ENCODE measurements at regions of chr10 and their contacts with region 1.

Region 1: GRCh38 chr10:106625751-106626150 is 538.8 kb downstream of the SORCS1 start:
- DNase-seq: no peak
- H3K4me3 Mint-ChIP-seq: no peak overlapping the region
- H3K27ac Mint-ChIP-seq: no peak overlapping the region
- H3K4me1 Mint-ChIP-seq: peaks cover 5% of the 10 kb centered on the region
- H3K27me3 Mint-ChIP-seq: no peaks in the 10 kb centered on the region
- CTCF ChIP-seq: no peak

Region 2: DNA sequence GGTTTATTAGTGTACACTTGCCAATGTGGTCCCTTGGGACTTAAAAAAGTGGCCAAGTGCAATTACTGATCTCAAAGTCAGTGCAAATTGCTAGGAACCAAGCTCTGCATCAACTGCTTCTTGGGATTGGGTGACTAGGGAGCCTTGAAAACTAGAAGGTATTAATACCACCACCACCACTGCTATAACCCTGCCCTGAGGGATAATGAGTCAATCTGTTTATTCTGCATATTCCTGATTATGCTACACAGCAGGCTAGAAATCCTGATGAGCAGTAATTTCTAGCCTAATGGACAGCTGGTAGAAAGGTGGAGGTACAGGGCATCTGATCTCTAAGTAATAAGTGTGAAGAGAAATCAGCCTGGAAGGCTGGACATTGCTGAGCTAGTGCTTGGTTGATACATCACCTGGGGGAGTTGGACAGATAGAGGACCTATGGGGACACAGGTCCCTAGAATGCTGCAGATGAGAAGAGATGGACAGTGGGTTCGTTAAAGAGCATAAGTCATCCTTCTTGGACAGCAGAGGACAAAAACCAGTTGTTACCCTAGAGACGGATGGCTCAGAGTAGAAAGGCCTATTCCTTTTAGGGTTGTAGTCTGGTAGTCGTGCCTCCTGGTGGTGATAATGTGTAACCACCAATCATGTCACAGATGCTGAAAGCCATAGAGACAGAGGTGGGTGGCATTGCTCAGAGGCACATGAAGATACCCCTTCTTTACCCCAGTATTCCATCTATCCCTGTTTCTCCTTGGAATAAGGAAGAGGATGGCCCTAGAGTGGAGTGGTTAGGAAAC is 16.1 kb before region 1 on chr10:
- CTCF ChIA-PET with region 1: interaction called, 21 read pairs
- POLR2A ChIA-PET with region 1: no interaction called
- intact Hi-C with region 1: no loop called
- DNase-seq: peak; percentile 47
- H3K4me3 Mint-ChIP-seq: no peak overlapping the region
- H3K27ac Mint-ChIP-seq: no peak overlapping the region
- H3K4me1 Mint-ChIP-seq: peaks cover 30% of the 10 kb centered on the region
- H3K27me3 Mint-ChIP-seq: no peaks in the 10 kb centered on the region
- CTCF ChIP-seq: peak; percentile 27

Region 3: GRCh38 chr10:106682175-106682574 is 56.4 kb after region 1 on chr10:
- CTCF ChIA-PET with region 1: interaction called, 125 read pairs
- POLR2A ChIA-PET with region 1: interaction called, 3 read pairs
- intact Hi-C with region 1: loop called (anchors 1 kb)
- DNase-seq: peak; percentile 31
- H3K4me3 Mint-ChIP-seq: no peak overlapping the region
- H3K27ac Mint-ChIP-seq: no peak overlapping the region
- H3K4me1 Mint-ChIP-seq: peaks cover 8% of the 10 kb centered on the region
- H3K27me3 Mint-ChIP-seq: no peaks in the 10 kb centered on the region
- CTCF ChIP-seq: peak; percentile 32

Region 4: GRCh38 chr10:106711313-106711906 is 85.7 kb after region 1 on chr10:
- CTCF ChIA-PET with region 1: interaction called, 10 read pairs
- POLR2A ChIA-PET with region 1: no interaction called
- intact Hi-C with region 1: no loop called
- DNase-seq: peak; percentile 56
- H3K4me3 Mint-ChIP-seq: no peak overlapping the region
- H3K27ac Mint-ChIP-seq: no peak overlapping the region
- H3K4me1 Mint-ChIP-seq: peaks cover under 1% of the 10 kb centered on the region
- H3K27me3 Mint-ChIP-seq: no peaks in the 10 kb centered on the region
- CTCF ChIP-seq: peak; percentile 89

Region 5: GRCh38 chr10:108204479-108205305 is 1578.9 kb after region 1 on chr10:
- CTCF ChIA-PET with region 1: interaction called, 15 read pairs
- POLR2A ChIA-PET with region 1: no interaction called
- intact Hi-C with region 1: no loop called
- DNase-seq: peak; percentile 59
- H3K4me3 Mint-ChIP-seq: no peak overlapping the region
- H3K27ac Mint-ChIP-seq: no peak overlapping the region
- H3K4me1 Mint-ChIP-seq: no peaks in the 10 kb centered on the region
- H3K27me3 Mint-ChIP-seq: no peaks in the 10 kb centered on the region
- CTCF ChIP-seq: peak; percentile 75